ENCODE measurements at regions of chr6 and their contacts with region 1.

Region 1: DNA sequence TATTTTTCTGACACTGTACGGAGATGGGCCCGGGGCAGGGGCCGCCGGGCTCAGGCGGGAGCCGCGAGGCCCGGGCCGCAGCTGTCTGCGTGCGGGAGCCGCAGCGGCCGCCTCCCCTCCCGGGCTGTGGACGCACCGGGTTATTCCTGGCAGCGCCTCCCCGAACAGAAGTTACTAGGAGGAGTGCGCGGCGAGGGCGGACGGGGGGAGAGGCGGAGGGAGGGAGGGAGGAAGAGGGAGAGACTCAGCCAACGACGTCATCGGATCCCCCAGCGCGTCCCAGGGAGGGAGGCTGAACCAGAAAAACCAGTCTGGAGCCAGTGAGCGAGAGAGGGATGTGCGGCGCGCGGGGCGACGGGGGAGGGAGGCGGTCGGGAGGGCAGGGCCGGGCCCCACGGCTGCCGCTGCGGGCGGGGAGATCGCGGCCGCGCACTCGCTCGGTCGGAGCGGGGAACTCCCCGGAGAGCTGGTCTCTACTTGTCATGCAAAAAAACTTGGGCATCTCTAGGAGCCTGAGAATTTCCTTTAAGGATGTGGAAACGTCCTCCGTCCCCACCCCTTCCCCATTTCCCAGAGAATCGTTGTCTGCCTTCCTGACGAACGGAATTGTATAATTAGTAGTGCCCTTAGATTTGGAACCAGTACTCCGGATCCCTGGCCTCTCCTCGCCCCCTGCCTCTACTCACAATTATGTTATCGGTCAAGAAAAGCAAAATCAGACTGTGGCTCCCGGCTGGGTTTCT is 1.4 kb upstream of the HIVEP2 start:
- DNase-seq: peak; percentile 97
- H3K4me3 ChIP-seq: peak overlapping the region; percentile 82 to 99 (median 86)
- H3K27ac ChIP-seq: peak overlapping the region; percentile 94 to 99 (median 98)
- H3K4me1 ChIP-seq: peaks cover 9 to 29% (median 13%) of the 10 kb centered on the region in 4 donors
- H3K27me3 ChIP-seq: no peaks in the 10 kb centered on the region
- CTCF ChIP-seq: no peak
- EP300 ChIP-seq: no peak
- POLR2A ChIP-seq: peak; percentile 94

Region 2: GRCh38 chr6:142885182-142885867 is 61.0 kb before region 1 on chr6:
- in situ Hi-C with region 1: no loop called
- intact Hi-C with region 1: loop called (anchors 10 kb)
- DNase-seq: peak; percentile 15
- H3K4me3 ChIP-seq: peak overlapping the region in 3 of 4 donors; percentile 1 to 27 (median 13)
- H3K27ac ChIP-seq: peak overlapping the region; percentile 45 to 60 (median 46)
- H3K4me1 ChIP-seq: peaks cover 6 to 28% (median 13%) of the 10 kb centered on the region in 4 donors
- H3K27me3 ChIP-seq: no peaks in the 10 kb centered on the region
- CTCF ChIP-seq: no peak
- EP300 ChIP-seq: peak; percentile 12
- POLR2A ChIP-seq: no peak

Region 3: DNA sequence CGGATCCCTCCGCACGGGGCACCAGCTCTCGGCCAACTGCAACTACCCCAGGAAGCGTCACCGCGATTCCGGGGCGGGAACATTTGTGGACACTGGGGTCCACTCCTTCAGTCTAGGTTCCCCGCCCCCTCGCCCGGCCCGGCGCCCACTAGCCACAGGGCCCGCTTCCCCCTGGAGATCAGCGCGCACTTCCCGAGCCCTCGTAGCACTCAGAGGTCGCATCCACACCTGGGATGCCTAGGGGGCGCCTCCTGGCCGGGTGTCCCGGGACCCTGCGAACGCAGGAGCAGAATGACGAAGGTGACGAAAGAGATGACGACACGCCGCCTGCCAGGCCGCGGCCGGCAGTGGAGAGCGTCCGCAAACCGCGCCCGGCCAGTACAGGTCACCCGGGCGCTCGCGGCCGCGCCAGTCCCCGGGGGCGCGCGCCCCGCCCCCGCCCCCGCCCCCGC is 114.0 kb after region 1 on chr6:
- in situ Hi-C with region 1: no loop called
- intact Hi-C with region 1: loop called (anchors 2 kb)
- DNase-seq: peak; percentile 89
- H3K4me3 ChIP-seq: peak overlapping the region; percentile 56 to 89 (median 82)
- H3K27ac ChIP-seq: peak overlapping the region; percentile 91 to 95 (median 93)
- H3K4me1 ChIP-seq: peaks cover 0 to 18% (median 8%) of the 10 kb centered on the region in 4 donors
- H3K27me3 ChIP-seq: no peaks in the 10 kb centered on the region
- CTCF ChIP-seq: peak in 1 of 5 experiments; percentile 24
- EP300 ChIP-seq: no peak
- POLR2A ChIP-seq: peak; percentile 83